WTC11 (cell line): ENCODE measurements at regions of chr4 and their contacts with region 1.

Region 1: GRCh38 chr4:4800646-4801408 is 58.6 kb upstream of the MSX1 start:
- DNase-seq: no peak
- ATAC-seq: no peak
- H3K4me3 Mint-ChIP-seq: no peak overlapping the region
- H3K27ac Mint-ChIP-seq: no peak overlapping the region
- H3K4me1 Mint-ChIP-seq: no peaks in the 10 kb centered on the region
- H3K27me3 Mint-ChIP-seq: peaks cover 42% of the 10 kb centered on the region
- CTCF ChIP-seq: no peak

Region 2: GRCh38 chr4:4356106-4357041 is 444.5 kb before region 1 on chr4:
- CTCF ChIA-PET with region 1: no interaction called
- POLR2A ChIA-PET with region 1: no interaction called
- DNase-seq: no peak
- ATAC-seq: no peak
- H3K4me3 Mint-ChIP-seq: no peak overlapping the region
- H3K27ac Mint-ChIP-seq: no peak overlapping the region
- H3K4me1 Mint-ChIP-seq: 0 out of 2 replicates have a peak, but pooled peaks cover 2% of the 10 kb centered on the region
- H3K27me3 Mint-ChIP-seq: peaks cover 11% of the 10 kb centered on the region
- CTCF ChIP-seq: no peak

Region 3: GRCh38 chr4:4651811-4652755 is 148.7 kb before region 1 on chr4:
- CTCF ChIA-PET with region 1: no interaction called
- POLR2A ChIA-PET with region 1: interaction called, 10 read pairs
- DNase-seq: peak; percentile 43
- ATAC-seq: peak; percentile 88
- H3K4me3 Mint-ChIP-seq: no peak overlapping the region
- H3K27ac Mint-ChIP-seq: peak overlapping the region; percentile 70; the same call in 1 of the 2 replicates
- H3K4me1 Mint-ChIP-seq: peaks cover 11% of the 10 kb centered on the region
- H3K27me3 Mint-ChIP-seq: no peaks in the 10 kb centered on the region
- CTCF ChIP-seq: no peak

Region 4: DNA sequence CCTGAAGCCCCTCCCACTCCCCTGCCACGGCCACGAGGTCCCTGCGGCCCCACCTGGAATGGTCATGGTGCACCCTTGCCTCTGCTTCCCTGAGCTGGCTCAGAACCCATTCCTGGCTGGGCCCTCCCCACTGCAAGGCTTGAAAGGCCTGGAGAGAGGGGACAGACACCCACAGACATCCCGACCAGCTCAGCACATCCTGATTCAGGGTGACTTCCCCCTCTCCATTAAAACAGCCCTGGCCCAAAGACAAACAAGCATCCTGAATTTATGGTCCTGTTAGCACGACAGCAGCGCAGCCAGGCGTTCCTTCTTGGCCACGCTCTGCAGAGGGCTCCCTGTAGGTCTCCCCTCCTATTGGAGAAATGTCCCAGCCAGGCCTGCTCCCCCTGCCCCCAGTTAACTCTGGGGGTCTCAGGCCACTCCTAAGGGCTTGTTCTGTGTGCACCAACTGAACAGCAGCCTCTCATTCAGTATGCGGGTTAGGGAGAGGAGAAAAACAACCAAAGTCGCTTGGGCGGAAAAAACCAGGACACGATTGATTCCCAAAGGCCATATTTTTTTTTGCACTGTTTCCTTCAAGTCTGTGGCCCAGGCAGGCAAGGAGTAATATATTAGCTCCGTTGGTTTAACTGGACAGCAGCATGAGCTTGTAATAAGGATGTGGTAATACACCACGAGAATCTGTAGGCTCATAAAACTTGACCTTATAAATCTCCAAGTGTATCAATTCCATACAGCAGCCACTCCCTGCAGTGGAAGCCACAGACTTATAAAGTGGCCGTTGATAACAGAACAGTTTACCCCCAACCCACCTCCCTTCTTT is 48.0 kb before region 1 on chr4:
- CTCF ChIA-PET with region 1: no interaction called
- POLR2A ChIA-PET with region 1: no interaction called
- DNase-seq: no peak
- ATAC-seq: no peak
- H3K4me3 Mint-ChIP-seq: no peak overlapping the region
- H3K27ac Mint-ChIP-seq: no peak overlapping the region
- H3K4me1 Mint-ChIP-seq: peaks cover 16% of the 10 kb centered on the region; the same call in 1 of the 2 replicates
- H3K27me3 Mint-ChIP-seq: peaks cover 1% of the 10 kb centered on the region; the same call in 1 of the 2 replicates
- CTCF ChIP-seq: no peak

Region 5: DNA sequence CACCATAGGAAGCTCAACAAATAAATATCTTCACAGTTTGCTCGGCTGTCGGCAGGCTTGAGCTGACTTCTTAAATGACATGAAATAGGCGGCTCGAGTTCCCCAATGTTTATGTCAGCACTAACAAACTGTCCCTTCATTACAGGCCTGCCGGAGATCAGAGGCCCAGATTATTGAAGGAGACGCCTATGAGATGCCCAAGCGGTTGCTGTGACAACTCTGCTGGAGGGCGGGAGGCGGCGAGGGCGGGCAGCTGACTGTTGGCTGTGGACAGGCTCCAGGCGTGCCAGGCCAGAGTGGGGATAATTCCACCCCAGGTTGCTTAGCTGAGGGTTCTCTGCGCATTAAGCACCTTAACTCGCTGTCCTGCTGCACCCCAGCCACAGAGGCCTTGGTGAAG is 19.4 kb after region 1 on chr4:
- CTCF ChIA-PET with region 1: no interaction called
- POLR2A ChIA-PET with region 1: no interaction called
- DNase-seq: no peak
- ATAC-seq: no peak
- H3K4me3 Mint-ChIP-seq: no peak overlapping the region
- H3K27ac Mint-ChIP-seq: no peak overlapping the region
- H3K4me1 Mint-ChIP-seq: no peaks in the 10 kb centered on the region
- H3K27me3 Mint-ChIP-seq: peaks cover 48% of the 10 kb centered on the region
- CTCF ChIP-seq: no peak